Adrenal gland (tissue), 19 donors: ENCODE measurements at regions of chrX and their contacts with region 1.

Region 1: GRCh38 chrX:106959901-106960300 is 39.7 kb downstream of the CLDN2 start:
- DNase-seq: peak in 1 of 7 donors; percentile 4
- H3K4me3 ChIP-seq: no peak overlapping the region
- H3K27ac ChIP-seq: no peak overlapping the region
- H3K4me1 ChIP-seq: no peaks in the 10 kb centered on the region
- H3K27me3 ChIP-seq: peaks cover 5% of the 10 kb centered on the region
- CTCF ChIP-seq: peak in 2 of 6 experiments; percentile 29 to 33
- POLR2A ChIP-seq: no peak

Region 2: DNA sequence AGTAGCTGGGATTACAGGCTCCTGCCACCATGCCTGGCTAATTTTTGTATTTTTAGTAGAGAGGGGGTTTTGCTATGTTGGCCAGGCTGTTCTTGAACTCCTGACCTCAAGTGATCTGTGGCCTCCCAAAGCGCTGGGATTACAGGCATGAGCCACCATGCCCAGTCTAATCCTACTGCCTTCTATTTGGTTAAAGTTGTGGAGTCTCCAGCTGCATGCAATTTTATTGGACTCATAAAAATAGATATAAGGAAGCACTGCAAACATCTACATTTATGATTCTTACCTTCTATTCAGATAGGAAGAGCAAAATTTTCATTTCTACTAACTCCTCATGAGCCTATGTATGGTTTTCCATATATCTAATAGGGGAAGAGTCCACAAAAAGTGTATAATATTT is 70.4 kb before region 1 on chrX:
- intact Hi-C with region 1: loop called in 1 of 2 experiments (anchors 5 kb)
- DNase-seq: no peak
- H3K4me3 ChIP-seq: no peak overlapping the region
- H3K27ac ChIP-seq: no peak overlapping the region
- H3K4me1 ChIP-seq: no peaks in the 10 kb centered on the region
- H3K27me3 ChIP-seq: peaks cover 10% of the 10 kb centered on the region
- CTCF ChIP-seq: no peak
- POLR2A ChIP-seq: no peak

Region 3: GRCh38 chrX:107050195-107050709 is 90.4 kb after region 1 on chrX:
- intact Hi-C with region 1: no loop called
- DNase-seq: peak in 3 of 7 donors; percentile 16 to 54 (median 37)
- H3K4me3 ChIP-seq: no peak overlapping the region
- H3K27ac ChIP-seq: no peak overlapping the region
- H3K4me1 ChIP-seq: no peaks in the 10 kb centered on the region
- H3K27me3 ChIP-seq: no peaks in the 10 kb centered on the region
- CTCF ChIP-seq: no peak
- POLR2A ChIP-seq: no peak